CD14-positive monocyte (primary cell): ENCODE measurements at regions of chr18 and their contacts with region 1.

Region 1: GRCh38 chr18:58535340-58536201 is 93.3 kb downstream of the ALPK2 start:
- DNase-seq: peak; percentile 95 to 99 (median 99)
- H3K4me3 ChIP-seq: no peak overlapping the region
- H3K4me3 Mint-ChIP-seq: peak overlapping the region; percentile 37 to 51
- H3K27ac ChIP-seq: peak overlapping the region; percentile 66 to 91
- H3K27ac Mint-ChIP-seq: peak overlapping the region; percentile 94 to 98 (median 97)
- H3K4me1 ChIP-seq: peaks cover 38 to 48% of the 10 kb centered on the region in 2 donors
- H3K4me1 Mint-ChIP-seq: peaks cover 60% of the 10 kb centered on the region
- H3K27me3 ChIP-seq: no peaks in the 10 kb centered on the region
- H3K27me3 Mint-ChIP-seq: peaks cover 5 to 14% (median 6%) of the 10 kb centered on the region in 3 donors
- CTCF ChIP-seq: no peak

Region 2: GRCh38 chr18:58223717-58224424 is 311.7 kb before region 1 on chr18:
- intact Hi-C with region 1: no loop called
- DNase-seq: peak; percentile 24 to 67 (median 34)
- H3K4me3 ChIP-seq: no peak overlapping the region
- H3K4me3 Mint-ChIP-seq: peak overlapping the region in 1 of 2 donors; percentile 42
- H3K27ac ChIP-seq: no peak overlapping the region
- H3K27ac Mint-ChIP-seq: peak overlapping the region in 1 of 7 donors; percentile 21
- H3K4me1 ChIP-seq: peaks cover 3 to 33% of the 10 kb centered on the region in 2 donors
- H3K4me1 Mint-ChIP-seq: peaks cover 45% of the 10 kb centered on the region
- H3K27me3 ChIP-seq: peaks cover 15 to 49% of the 10 kb centered on the region in 2 donors
- H3K27me3 Mint-ChIP-seq: peaks cover 40 to 53% (median 51%) of the 10 kb centered on the region in 3 donors
- CTCF ChIP-seq: no peak

Region 3: GRCh38 chr18:58567453-58568196 is 32.1 kb after region 1 on chr18:
- intact Hi-C with region 1: loop called in 1 of 2 experiments (anchors 2 kb)
- DNase-seq: no peak
- H3K4me3 ChIP-seq: no peak overlapping the region
- H3K4me3 Mint-ChIP-seq: no peak overlapping the region
- H3K27ac ChIP-seq: no peak overlapping the region
- H3K27ac Mint-ChIP-seq: peak overlapping the region in 1 of 7 donors; percentile 70
- H3K4me1 ChIP-seq: peaks cover 20 to 39% of the 10 kb centered on the region in 2 donors
- H3K4me1 Mint-ChIP-seq: peaks cover 24% of the 10 kb centered on the region
- H3K27me3 ChIP-seq: no peaks in the 10 kb centered on the region
- H3K27me3 Mint-ChIP-seq: peaks cover 5 to 9% (median 7%) of the 10 kb centered on the region in 3 donors
- CTCF ChIP-seq: no peak